MCF 10A (cell line): ENCODE measurements at regions of chr10 and their contacts with region 1.

Region 1: DNA sequence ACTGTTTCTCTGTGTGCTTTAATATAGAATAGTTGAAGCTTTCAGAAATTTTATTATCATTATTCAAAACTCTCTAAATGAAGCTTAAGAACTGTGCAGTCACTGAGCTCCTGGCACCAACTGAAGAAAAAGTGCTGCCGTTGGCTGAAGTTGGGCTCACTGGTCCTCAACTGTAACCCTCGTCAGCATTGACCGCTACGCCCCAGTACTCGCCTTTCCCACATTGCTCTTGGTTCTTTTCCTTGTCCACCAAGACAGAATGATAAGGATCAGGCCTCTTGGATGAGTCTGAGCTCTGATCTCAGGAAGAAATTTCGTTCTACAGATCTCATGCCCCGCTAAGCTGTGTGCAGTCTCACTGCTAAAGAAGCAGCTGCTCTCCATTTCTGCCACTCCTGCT is 7.9 kb upstream of the TAF3 start:
- DNase-seq: no peak
- H3K4me3 Mint-ChIP-seq: no peak overlapping the region
- H3K27ac Mint-ChIP-seq: no peak overlapping the region
- H3K4me1 Mint-ChIP-seq: no peaks in the 10 kb centered on the region
- H3K27me3 Mint-ChIP-seq: no peaks in the 10 kb centered on the region
- CTCF ChIP-seq: no peak

Region 2: GRCh38 chr10:6621536-6621935 is 1188.9 kb before region 1 on chr10:
- CTCF ChIA-PET with region 1: no interaction called
- POLR2A ChIA-PET with region 1: no interaction called
- intact Hi-C with region 1: no loop called
- DNase-seq: peak; percentile 33
- H3K4me3 Mint-ChIP-seq: no peak overlapping the region
- H3K27ac Mint-ChIP-seq: no peak overlapping the region
- H3K4me1 Mint-ChIP-seq: no peaks in the 10 kb centered on the region
- H3K27me3 Mint-ChIP-seq: peaks cover 25% of the 10 kb centered on the region
- CTCF ChIP-seq: no peak

Region 3: GRCh38 chr10:7635408-7636110 is 174.9 kb before region 1 on chr10:
- CTCF ChIA-PET with region 1: no interaction called
- POLR2A ChIA-PET with region 1: no interaction called
- intact Hi-C with region 1: no loop called
- DNase-seq: no peak
- H3K4me3 Mint-ChIP-seq: no peak overlapping the region
- H3K27ac Mint-ChIP-seq: no peak overlapping the region
- H3K4me1 Mint-ChIP-seq: no peaks in the 10 kb centered on the region
- H3K27me3 Mint-ChIP-seq: peaks cover 10% of the 10 kb centered on the region
- CTCF ChIP-seq: no peak

Region 4: GRCh38 chr10:7797582-7797981 is 12.9 kb before region 1 on chr10:
- CTCF ChIA-PET with region 1: interaction called, 4 read pairs
- POLR2A ChIA-PET with region 1: interaction called, 12 read pairs
- intact Hi-C with region 1: no loop called
- DNase-seq: peak; percentile 71
- H3K4me3 Mint-ChIP-seq: no peak overlapping the region
- H3K27ac Mint-ChIP-seq: peak overlapping the region; percentile 50
- H3K4me1 Mint-ChIP-seq: peaks cover 27% of the 10 kb centered on the region
- H3K27me3 Mint-ChIP-seq: no peaks in the 10 kb centered on the region
- CTCF ChIP-seq: no peak

Region 5: GRCh38 chr10:7853890-7854289 is 43.4 kb after region 1 on chr10:
- CTCF ChIA-PET with region 1: no interaction called
- POLR2A ChIA-PET with region 1: no interaction called
- intact Hi-C with region 1: no loop called
- DNase-seq: no peak
- H3K4me3 Mint-ChIP-seq: no peak overlapping the region
- H3K27ac Mint-ChIP-seq: no peak overlapping the region
- H3K4me1 Mint-ChIP-seq: peaks cover 7% of the 10 kb centered on the region
- H3K27me3 Mint-ChIP-seq: no peaks in the 10 kb centered on the region
- CTCF ChIP-seq: no peak